ENCODE measurements at regions of chr3 and their contacts with region 1.

Region 1: DNA sequence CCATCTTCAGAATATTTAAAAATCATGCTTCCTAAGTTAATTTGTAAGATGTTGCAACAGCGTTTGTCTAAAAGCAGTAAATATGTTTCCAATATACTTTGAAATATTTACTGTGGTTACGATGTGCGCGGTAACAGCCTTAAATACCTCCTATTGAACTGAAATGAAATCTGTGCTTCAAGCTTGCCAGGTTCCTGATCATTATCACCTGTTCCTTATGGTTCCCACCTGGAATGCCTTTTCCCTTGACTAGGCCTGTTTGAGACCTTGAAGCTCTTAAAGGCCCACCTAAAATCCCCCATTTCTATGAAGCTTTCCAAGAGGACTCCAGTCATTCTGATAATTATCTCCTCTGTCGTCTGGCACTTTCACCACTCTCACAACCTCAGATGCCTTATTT is 146.7 kb downstream of the NAALADL2 start:
- DNase-seq: no peak
- ATAC-seq: no peak
- H3K4me3 ChIP-seq: no peak overlapping the region
- H3K27ac ChIP-seq: no peak overlapping the region
- H3K4me1 ChIP-seq: no peaks in the 10 kb centered on the region
- H3K27me3 ChIP-seq: no peaks in the 10 kb centered on the region
- CTCF ChIP-seq: no peak

Region 2: DNA sequence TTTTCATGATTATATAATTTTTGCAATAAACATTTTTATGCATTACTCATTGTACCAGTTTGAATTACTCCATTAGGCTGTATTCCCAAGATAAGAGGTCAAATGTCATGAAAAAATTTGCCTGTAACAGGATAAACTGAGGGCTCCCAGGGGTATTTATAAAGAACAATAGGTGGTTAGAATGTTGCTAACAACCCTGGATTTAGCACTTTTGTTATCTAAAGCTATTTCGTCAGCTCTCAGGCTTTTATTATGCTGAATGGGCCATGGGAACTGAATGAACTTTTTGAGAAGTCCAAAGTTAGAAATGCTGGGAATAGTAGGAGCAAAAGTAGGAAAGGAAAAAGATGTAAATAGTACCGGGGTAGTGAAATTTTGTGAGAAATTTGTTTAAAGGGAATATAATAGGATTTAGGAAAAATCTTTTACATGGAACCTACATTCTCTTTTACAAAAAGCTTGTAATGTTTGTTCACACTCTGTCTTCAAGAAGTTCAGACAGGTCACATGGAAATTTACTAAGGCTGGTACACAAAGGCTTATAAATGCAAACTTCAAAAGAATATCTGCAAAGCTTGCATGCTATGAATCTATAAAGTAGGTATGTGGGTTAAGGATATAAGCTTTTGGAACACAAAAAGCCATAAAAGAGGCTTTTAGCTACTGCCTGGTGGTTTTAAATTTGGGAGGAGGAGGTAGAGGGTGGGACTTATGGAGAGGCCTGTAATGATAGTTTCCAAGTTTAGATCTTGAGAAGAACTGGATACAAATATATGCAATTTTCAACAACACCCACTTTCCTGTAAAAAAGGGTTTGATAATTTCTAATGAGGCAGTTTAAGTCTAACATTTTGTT is 592.6 kb before region 1 on chr3:
- CTCF ChIA-PET with region 1: no interaction called
- POLR2A ChIA-PET with region 1: no interaction called
- in situ Hi-C with region 1: no loop called
- intact Hi-C with region 1: loop called (anchors 5 kb)
- DNase-seq: no peak
- ATAC-seq: no peak
- H3K4me3 ChIP-seq: no peak overlapping the region
- H3K27ac ChIP-seq: no peak overlapping the region
- H3K4me1 ChIP-seq: no peaks in the 10 kb centered on the region; the same call in 1 of the 2 replicates
- H3K27me3 ChIP-seq: no peaks in the 10 kb centered on the region
- CTCF ChIP-seq: no peak

Region 3: DNA sequence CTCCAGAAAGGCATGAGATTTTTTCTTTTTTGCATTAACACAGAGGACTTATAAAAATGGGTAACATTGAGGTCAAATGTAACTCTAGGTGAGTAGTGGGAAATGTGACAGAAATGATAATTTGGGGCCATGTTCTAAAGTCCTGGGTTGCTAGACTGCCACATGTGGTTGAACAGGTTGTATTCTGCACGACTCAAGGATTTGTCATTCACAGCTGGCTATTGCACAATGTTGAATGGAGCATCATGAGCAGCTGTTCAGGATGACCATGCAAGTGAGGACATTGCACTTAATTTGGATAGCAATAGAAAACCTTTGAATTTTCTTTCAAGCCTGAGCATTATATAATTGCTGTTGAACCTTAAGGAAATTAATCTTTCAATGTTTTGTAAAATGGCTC is 249.8 kb after region 1 on chr3:
- CTCF ChIA-PET with region 1: no interaction called
- POLR2A ChIA-PET with region 1: no interaction called
- in situ Hi-C with region 1: no loop called
- intact Hi-C with region 1: no loop called
- DNase-seq: no peak
- ATAC-seq: no peak
- H3K4me3 ChIP-seq: no peak overlapping the region
- H3K27ac ChIP-seq: no peak overlapping the region
- H3K4me1 ChIP-seq: no peaks in the 10 kb centered on the region
- H3K27me3 ChIP-seq: no peaks in the 10 kb centered on the region
- CTCF ChIP-seq: no peak; the same call in 1 of the 2 replicates

Region 4: GRCh38 chr3:175716446-175716845 is 710.6 kb after region 1 on chr3:
- CTCF ChIA-PET with region 1: no interaction called
- POLR2A ChIA-PET with region 1: interaction called, 16 read pairs
- in situ Hi-C with region 1: no loop called
- intact Hi-C with region 1: no loop called
- DNase-seq: no peak
- ATAC-seq: no peak
- H3K4me3 ChIP-seq: no peak overlapping the region
- H3K27ac ChIP-seq: no peak overlapping the region
- H3K4me1 ChIP-seq: no peaks in the 10 kb centered on the region
- H3K27me3 ChIP-seq: no peaks in the 10 kb centered on the region
- CTCF ChIP-seq: no peak